HEK293 (cell line): ENCODE measurements at regions of chr1 and their contacts with region 1.

Region 1: DNA sequence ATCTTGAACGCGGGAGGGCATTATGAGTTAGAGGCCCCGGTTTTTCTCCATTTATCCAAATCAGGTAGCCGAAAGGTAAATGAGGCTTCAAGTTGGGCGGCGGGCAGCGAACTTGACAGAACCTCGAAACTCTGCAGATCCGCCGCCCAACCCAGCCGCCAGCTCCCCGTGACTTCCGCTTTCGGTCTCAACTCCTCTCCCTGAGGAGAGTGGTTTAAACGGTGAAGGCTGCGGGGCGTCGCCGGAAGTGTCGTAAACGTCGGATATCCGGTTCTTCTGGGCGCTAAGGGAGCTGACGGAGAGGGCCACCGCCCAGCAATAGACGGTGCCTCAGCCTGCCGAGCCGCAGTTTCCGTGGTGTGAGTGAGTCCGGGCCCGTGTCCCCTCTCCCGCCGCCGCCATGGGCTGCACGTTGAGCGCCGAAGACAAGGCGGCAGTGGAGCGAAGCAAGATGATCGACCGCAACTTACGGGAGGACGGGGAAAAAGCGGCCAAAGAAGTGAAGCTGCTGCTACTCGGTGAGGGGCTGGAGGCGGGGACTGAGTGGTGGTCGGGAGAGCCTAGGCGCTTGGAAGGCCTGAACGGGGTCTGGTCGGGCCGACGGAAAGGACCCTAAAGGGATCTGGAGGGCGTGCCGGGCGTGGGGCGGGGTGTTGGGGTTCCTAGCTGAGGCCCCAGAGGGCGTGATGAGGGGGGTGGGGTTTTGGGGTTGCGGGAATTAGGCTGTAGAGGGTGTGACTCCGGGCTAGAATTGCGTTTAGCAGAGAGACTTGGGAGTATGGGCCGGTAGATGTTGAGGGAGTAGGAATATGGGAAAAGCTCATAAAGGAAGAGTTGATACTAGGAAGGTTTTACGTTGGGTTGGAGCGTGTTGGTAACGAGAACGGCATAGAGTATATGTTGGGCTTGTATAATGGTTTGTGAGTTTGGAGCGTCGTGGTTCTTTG is at the start of gene GNAI3:
- H3K4me3 ChIP-seq: peak within 1 kb of the TSS; percentile 57
- H3K27ac ChIP-seq: peak within 1 kb of the TSS; percentile 78
- H3K4me1 ChIP-seq: peaks cover 6% of the 10 kb centered on the region; the same call in 1 of the 2 replicates
- CTCF ChIP-seq: peak; percentile 36; the same call in 1 of the 2 replicates

Region 2: GRCh38 chr1:109521002-109521951 is 27.3 kb before region 1 on chr1:
- CTCF ChIA-PET with region 1: no interaction called
- POLR2A ChIA-PET with region 1: no interaction called
- H3K4me3 ChIP-seq: no peak overlapping the region
- H3K27ac ChIP-seq: no peak overlapping the region
- H3K4me1 ChIP-seq: no peaks in the 10 kb centered on the region
- CTCF ChIP-seq: no peak

Region 3: GRCh38 chr1:109532365-109533136 is 16.0 kb before region 1 on chr1:
- CTCF ChIA-PET with region 1: interaction called, 30 read pairs
- POLR2A ChIA-PET with region 1: interaction called, 4 read pairs
- H3K4me3 ChIP-seq: no peak overlapping the region
- H3K27ac ChIP-seq: no peak overlapping the region
- H3K4me1 ChIP-seq: no peaks in the 10 kb centered on the region
- CTCF ChIP-seq: peak; percentile 82

Region 4: DNA sequence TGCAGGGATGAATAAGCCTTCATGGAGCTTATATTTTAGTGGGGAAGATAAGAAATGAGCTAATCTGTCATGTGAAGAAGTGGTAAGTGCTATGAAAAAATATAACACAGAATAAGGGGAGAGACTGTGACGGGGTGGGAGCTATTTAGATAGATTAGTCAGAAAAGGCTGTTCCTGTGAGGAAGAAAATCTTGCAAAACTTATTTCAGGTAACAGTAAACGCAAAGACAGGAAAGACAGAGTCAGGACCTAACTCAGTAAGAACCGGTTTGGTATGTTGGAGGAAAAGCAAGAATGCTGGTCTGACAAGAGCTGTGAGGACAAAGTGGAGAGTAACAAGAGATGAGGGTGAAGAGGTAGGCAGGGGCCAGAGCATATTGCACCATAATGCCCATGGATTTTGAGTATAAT is 21.8 kb after region 1 on chr1:
- CTCF ChIA-PET with region 1: interaction called, 8 read pairs
- POLR2A ChIA-PET with region 1: interaction called, 15 read pairs
- H3K4me3 ChIP-seq: no peak overlapping the region
- H3K27ac ChIP-seq: no peak overlapping the region
- H3K4me1 ChIP-seq: peaks cover 29% of the 10 kb centered on the region
- CTCF ChIP-seq: no peak

Region 5: GRCh38 chr1:109620841-109621286 is 72.3 kb after region 1 on chr1:
- CTCF ChIA-PET with region 1: interaction called, 18 read pairs
- POLR2A ChIA-PET with region 1: interaction called, 29 read pairs
- H3K4me3 ChIP-seq: peak overlapping the region; percentile 73
- H3K27ac ChIP-seq: peak overlapping the region; percentile 78; the same call in 1 of the 2 replicates
- H3K4me1 ChIP-seq: peaks cover 4% of the 10 kb centered on the region; the same call in 1 of the 2 replicates
- CTCF ChIP-seq: no peak

Region 6: DNA sequence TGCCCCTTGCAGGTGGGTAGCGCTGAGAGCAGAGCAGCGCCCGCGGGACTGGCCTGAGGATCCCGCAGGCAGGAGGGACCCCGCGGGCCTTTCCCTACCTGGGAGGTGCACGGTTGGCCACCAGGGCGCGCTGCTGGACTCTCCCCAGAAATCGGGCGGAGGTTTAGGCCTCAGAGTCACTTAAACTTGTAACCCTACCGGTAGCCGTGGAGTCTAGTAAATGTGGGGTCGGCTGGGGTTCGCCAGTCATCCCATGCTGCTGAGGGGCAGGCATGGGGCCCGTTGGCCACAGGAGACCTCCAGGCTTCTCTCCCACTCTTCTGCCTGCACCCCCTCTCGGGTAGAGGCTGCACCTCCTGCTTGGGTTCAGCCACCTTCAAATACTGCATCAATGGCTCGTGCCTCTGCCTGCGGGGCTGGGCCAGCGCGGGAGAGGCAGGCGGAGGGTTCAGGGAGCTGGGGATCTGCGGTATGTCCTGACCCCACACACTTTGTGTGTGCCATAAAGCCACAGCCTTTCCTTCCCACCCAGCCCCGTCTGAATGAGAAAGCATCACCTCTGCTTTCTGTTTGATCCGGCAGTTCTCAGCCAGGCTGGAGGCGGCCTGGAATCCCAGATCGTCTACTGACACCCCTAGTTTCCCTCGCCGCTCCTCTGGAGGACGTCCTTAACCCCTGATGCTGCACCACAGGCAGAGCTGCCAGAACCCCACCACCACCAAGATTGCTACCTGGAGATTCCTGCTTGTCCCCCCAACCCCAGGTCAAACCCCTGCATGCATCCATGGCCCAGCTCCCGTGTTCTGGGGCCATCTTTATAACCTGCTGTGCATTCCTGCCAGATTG is 95.0 kb after region 1 on chr1:
- CTCF ChIA-PET with region 1: interaction called, 158 read pairs
- POLR2A ChIA-PET with region 1: interaction called, 44 read pairs
- H3K4me3 ChIP-seq: no peak overlapping the region
- H3K27ac ChIP-seq: no peak overlapping the region
- H3K4me1 ChIP-seq: no peaks in the 10 kb centered on the region
- CTCF ChIP-seq: peak; percentile 89

Region 7: DNA sequence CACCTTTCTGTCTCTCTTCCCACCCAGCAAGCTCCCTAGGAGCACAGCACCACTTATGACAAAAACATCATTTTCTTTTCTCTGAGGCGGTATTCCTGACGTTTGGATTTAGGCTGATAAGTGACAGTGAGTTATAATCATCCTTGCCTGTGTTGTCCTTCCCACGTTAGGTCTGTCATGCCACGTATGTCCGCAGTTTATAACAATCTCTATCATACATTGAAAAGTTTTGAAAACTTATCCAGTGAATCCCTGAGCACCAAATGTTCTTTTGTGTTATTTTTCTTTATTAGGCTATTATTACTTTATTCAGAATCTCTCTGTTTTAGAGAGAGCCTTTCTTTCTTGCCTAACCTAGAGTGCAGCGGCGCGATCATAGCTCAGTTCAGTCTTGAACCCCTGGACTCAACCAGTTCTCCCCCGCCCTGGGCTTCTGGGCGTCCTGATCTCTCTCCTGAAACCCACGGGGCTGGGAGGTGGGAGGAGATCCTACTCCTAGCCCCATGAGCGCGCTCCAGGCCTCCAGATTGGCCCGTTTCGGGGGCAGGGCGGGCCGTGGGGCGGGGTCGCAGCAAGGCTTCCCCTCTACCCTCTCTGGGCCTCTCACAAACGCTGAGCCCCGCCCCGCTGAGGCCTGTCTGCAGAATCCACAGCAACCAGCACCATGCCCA is 119.0 kb after region 1 on chr1 and contains the start of gene GSTM2:
- CTCF ChIA-PET with region 1: no interaction called
- POLR2A ChIA-PET with region 1: no interaction called
- H3K4me3 ChIP-seq: no peak within 1 kb of the TSS
- H3K27ac ChIP-seq: no peak within 1 kb of the TSS
- H3K4me1 ChIP-seq: no peaks in the 10 kb centered on the region
- CTCF ChIP-seq: no peak

Region 8: GRCh38 chr1:109773146-109773899 is 224.7 kb after region 1 on chr1:
- CTCF ChIA-PET with region 1: interaction called, 114 read pairs
- POLR2A ChIA-PET with region 1: interaction called, 7 read pairs
- H3K4me3 ChIP-seq: no peak overlapping the region
- H3K27ac ChIP-seq: no peak overlapping the region
- H3K4me1 ChIP-seq: no peaks in the 10 kb centered on the region
- CTCF ChIP-seq: peak; percentile 81; the same call in 1 of the 2 replicates

Region 9: GRCh38 chr1:110185181-110185580 is 636.6 kb after region 1 on chr1:
- CTCF ChIA-PET with region 1: no interaction called
- POLR2A ChIA-PET with region 1: no interaction called
- H3K4me3 ChIP-seq: no peak overlapping the region
- H3K27ac ChIP-seq: no peak overlapping the region
- H3K4me1 ChIP-seq: peaks cover 13% of the 10 kb centered on the region
- CTCF ChIP-seq: no peak